Spleen (tissue), 13 donors: ENCODE measurements at regions of chr12 and their contacts with region 1.

Region 1: DNA sequence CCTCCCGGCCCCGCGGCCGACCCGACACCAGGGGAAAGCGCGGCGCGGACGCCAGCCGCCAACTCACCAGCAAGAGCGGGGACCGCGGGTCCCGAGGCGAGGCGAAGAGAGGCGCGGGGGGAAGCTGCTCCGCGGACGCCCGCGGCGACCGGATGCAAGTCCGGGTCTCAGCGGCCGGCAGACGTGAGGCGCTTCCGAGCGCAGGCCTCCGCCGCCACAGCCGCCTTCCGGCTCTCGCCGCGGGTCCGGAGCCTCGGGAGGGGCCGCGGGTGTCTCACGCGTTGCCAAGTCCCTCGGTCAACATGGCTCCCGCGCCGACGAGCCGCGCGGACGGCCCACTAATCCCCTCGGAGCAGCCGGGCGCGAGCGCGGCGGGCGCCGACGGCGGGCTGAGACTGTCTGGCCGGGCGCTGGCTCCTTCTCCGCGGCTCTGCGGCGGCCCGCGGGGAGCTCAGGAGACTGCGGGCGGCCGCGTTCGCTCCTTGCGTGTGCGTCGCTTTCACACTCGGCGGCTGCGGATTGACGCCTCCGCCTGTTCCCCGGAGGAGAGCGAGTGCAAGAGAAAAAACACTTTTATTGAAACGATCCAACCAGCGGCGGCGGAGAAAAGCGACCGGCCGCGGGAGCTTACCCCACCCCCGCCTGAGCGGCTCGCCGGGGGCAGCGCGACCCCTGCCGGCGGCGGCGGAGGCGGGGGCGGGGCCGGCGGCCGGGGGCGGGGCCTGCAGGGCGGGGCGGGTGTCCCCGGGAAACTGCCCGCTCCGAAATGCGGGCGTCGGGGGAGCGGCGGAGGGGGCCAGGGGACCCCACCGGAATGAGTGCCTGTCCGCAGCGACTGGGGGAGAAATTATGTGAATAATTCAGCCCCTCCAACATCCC is at the start of gene CDK17:
- DNase-seq: peak; percentile 97
- H3K4me3 ChIP-seq: peak within 1 kb of the TSS; percentile 71 to 96 (median 88)
- H3K27ac ChIP-seq: peak within 1 kb of the TSS; percentile 98 to 100 (median 99)
- H3K4me1 ChIP-seq: peaks cover 35 to 59% (median 48%) of the 10 kb centered on the region in 6 donors
- H3K27me3 ChIP-seq: no peaks in the 10 kb centered on the region
- CTCF ChIP-seq: peak in 8 of 11 experiments; percentile 15 to 83 (median 56)
- POLR2A ChIP-seq: peak in 1 of 3 donors; percentile 70
- total RNA-seq, gene CDK17: 56.6 to 108 (median 71.6) TPM

Region 2: GRCh38 chr12:95733141-95733825 is 666.9 kb before region 1 on chr12:
- intact Hi-C with region 1: no loop called
- DNase-seq: no peak
- H3K4me3 ChIP-seq: no peak overlapping the region
- H3K27ac ChIP-seq: peak overlapping the region in 7 of 8 donors; percentile 47 to 75 (median 65)
- H3K4me1 ChIP-seq: peaks cover 3 to 39% (median 21%) of the 10 kb centered on the region in 6 donors
- H3K27me3 ChIP-seq: no peaks in the 10 kb centered on the region
- CTCF ChIP-seq: no peak
- POLR2A ChIP-seq: no peak

Region 3: DNA sequence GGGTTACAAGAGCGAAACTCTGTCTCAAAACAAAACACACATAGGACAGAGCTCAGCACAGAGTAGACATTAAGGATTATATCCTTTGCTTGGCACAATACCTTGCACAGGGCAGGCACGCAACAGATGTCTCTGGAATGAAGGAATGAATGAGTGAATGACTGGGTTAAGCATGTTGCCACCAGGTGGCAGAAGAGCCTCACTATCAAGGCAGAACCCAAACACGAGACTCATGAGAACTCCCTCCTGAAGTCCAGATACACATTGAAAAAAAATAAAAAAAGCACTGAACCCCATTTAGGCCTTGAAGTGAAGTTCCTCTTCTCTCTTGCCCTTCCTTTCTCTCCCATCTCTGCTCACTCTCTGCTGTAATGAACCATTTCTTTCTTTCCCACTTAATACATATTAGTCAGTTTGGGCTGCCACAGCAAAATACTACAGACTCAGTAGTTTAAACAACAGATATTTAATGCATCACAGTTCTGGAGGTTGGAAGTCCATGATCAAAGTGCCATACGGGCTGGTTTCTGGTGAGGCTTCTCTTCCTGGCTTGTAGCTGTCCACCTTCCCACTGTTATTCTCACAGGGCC is 338.2 kb before region 1 on chr12:
- intact Hi-C with region 1: loop called (anchors 10 kb)
- DNase-seq: peak; percentile 83
- H3K4me3 ChIP-seq: no peak overlapping the region
- H3K27ac ChIP-seq: peak overlapping the region in 4 of 8 donors; percentile 46 to 54 (median 49)
- H3K4me1 ChIP-seq: peaks cover 4 to 30% (median 26%) of the 10 kb centered on the region in 6 donors
- H3K27me3 ChIP-seq: no peaks in the 10 kb centered on the region
- CTCF ChIP-seq: peak; percentile 78 to 98 (median 88)
- POLR2A ChIP-seq: no peak

Region 4: GRCh38 chr12:96219698-96220206 is 180.4 kb before region 1 on chr12:
- intact Hi-C with region 1: loop called (anchors 10 kb)
- DNase-seq: no peak
- H3K4me3 ChIP-seq: no peak overlapping the region
- H3K27ac ChIP-seq: peak overlapping the region in 1 of 8 donors; percentile 17
- H3K4me1 ChIP-seq: peaks cover 13 to 62% (median 42%) of the 10 kb centered on the region in 6 donors
- H3K27me3 ChIP-seq: no peaks in the 10 kb centered on the region
- CTCF ChIP-seq: no peak
- POLR2A ChIP-seq: no peak

Region 5: GRCh38 chr12:96489103-96490056 is 89.2 kb after region 1 on chr12 and contains the start of gene CFAP54:
- intact Hi-C with region 1: loop called (anchors 10 kb)
- DNase-seq: peak; percentile 99
- H3K4me3 ChIP-seq: peak within 1 kb of the TSS; percentile 58 to 80 (median 70)
- H3K27ac ChIP-seq: peak within 1 kb of the TSS in 6 of 8 donors; percentile 20 to 70 (median 53)
- H3K4me1 ChIP-seq: peaks cover 4 to 26% (median 14%) of the 10 kb centered on the region in 6 donors
- H3K27me3 ChIP-seq: peaks cover 0 to 11% (median 0%) of the 10 kb centered on the region in 7 donors
- CTCF ChIP-seq: peak; percentile 88 to 97 (median 93)
- POLR2A ChIP-seq: peak in 1 of 3 donors; percentile 12
- total RNA-seq, gene CFAP54: 1.1 to 3.6 (median 2.7) TPM

Region 6: DNA sequence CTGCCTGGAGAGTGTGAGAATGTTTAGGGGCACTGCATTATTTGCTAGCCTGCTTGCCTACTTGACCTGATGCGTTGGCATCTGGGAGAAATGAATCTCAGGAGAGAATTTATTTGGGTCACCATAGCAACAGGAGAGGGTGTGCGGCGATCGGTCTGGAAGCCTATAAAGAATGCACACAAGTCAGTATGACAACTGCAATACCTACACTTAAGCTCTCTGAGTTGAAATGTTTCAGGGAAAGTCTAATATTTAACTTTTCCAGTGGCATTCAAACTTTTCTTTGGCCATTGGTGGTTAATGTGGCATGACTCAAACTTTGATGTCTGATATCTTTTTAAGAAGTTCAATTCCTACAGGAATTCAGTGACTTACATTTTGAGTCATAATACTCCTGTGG is 712.0 kb after region 1 on chr12:
- intact Hi-C with region 1: no loop called
- DNase-seq: no peak
- H3K4me3 ChIP-seq: no peak overlapping the region
- H3K27ac ChIP-seq: no peak overlapping the region
- H3K4me1 ChIP-seq: no peaks in the 10 kb centered on the region
- H3K27me3 ChIP-seq: no peaks in the 10 kb centered on the region
- CTCF ChIP-seq: no peak
- POLR2A ChIP-seq: no peak